Heart right ventricle (tissue), 16 donors: ENCODE measurements at regions of chr4 and their contacts with region 1.

Region 1: GRCh38 chr4:151184523-151185458 is 85.4 kb downstream of the RPS3A start:
- DNase-seq: no peak
- ATAC-seq: peak in 1 of 8 donors; percentile 61
- H3K4me3 ChIP-seq: no peak overlapping the region
- H3K27ac ChIP-seq: no peak overlapping the region
- H3K4me1 ChIP-seq: peaks cover 0 to 14% (median 5%) of the 10 kb centered on the region in 9 donors
- H3K27me3 ChIP-seq: no peaks in the 10 kb centered on the region
- CTCF ChIP-seq: no peak

Region 2: GRCh38 chr4:152784490-152785350 is 1599.9 kb after region 1 on chr4:
- intact Hi-C with region 1: loop called in 1 of 10 experiments (anchors 5 kb)
- DNase-seq: peak in 1 of 2 donors; percentile 11
- ATAC-seq: no peak
- H3K4me3 ChIP-seq: no peak overlapping the region
- H3K27ac ChIP-seq: no peak overlapping the region
- H3K4me1 ChIP-seq: peaks cover 0 to 62% (median 39%) of the 10 kb centered on the region in 9 donors
- H3K27me3 ChIP-seq: no peaks in the 10 kb centered on the region
- CTCF ChIP-seq: peak in 2 of 9 donors; percentile 10 to 31